ENCODE measurements at regions of chr9 and their contacts with region 1.

Region 1: DNA sequence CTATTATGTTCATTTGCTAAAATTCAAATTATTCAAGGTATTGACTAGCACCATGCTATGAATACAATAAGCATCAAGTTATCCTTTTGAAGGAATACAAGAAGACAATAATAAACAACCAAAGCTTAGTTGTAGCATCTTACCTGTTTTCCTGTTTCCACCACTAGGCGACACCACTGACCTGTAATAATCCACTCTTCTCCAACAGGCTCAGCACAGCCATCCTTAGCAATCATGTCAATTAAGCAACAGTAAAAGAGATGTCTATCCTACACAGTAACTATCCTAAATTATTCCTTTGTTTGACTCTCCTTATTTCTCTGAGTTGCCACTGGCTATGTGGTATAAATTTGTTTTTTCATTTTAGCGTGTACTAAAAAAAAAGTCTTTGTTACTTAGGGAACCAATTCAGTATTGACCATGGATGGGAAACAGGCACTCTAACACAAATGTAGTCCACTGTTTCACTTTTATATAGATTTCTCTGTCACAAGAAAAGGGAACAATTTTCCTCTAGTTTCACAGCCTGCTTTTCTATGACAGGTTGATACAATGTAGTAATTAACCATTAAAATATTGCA is 46.2 kb downstream of the PCA3 start:
- DNase-seq: peak; percentile 33
- CTCF ChIP-seq: peak; percentile 67

Region 2: DNA sequence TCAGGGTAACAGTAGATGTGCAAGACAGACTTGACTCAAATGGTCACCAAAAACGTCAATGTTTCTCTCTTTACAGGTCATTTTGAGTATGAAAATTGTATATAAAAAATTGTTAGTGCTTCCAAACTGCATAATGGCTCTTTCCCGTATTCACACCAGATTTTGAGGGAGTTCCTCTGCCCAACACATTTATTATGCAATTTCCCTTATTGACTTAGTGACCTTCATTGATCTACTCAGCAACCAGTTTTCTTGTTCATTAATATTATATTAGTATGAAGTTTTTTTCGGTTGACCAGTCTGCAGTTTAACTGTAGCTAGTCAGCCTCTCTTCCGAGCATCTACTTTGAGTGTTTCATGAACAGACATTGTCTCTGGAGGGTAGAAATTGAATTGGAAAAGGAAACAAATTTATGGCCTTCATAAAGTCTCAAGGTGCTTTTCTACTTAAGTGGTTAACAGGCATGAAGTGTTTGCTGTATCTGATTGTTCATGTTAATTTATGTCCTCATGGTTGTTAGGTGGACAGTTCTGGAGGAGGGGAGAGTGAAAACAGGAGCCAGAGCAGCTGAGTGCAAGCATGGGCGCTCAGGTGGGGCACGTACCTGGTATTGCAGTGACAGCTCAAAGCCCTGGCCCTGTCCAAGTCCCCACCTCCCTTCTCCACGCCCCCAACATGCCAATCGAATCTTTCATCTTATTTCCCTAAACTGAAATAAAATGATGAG is 656.4 kb before region 1 on chr9:
- in situ Hi-C with region 1: no loop called
- DNase-seq: no peak
- CTCF ChIP-seq: no peak

Region 3: GRCh38 chr9:77000330-77000729 is 189.9 kb after region 1 on chr9:
- in situ Hi-C with region 1: loop called (anchors 10 kb)
- DNase-seq: no peak
- CTCF ChIP-seq: no peak

Region 4: GRCh38 chr9:77131399-77131798 is 320.9 kb after region 1 on chr9:
- in situ Hi-C with region 1: loop called (anchors 25 kb)
- DNase-seq: no peak
- CTCF ChIP-seq: no peak